Transverse colon (tissue), 4 donors: ENCODE measurements at regions of chr2 and their contacts with region 1.

Region 1: GRCh38 chr2:152600698-152601097 is 116.6 kb downstream of the PRPF40A start:
- DNase-seq: no peak
- H3K4me3 ChIP-seq: no peak overlapping the region
- H3K27ac ChIP-seq: no peak overlapping the region
- H3K4me1 ChIP-seq: no peaks in the 10 kb centered on the region
- H3K27me3 ChIP-seq: no peaks in the 10 kb centered on the region
- CTCF ChIP-seq: no peak
- EP300 ChIP-seq: no peak
- POLR2A ChIP-seq: no peak

Region 2: GRCh38 chr2:152558158-152558984 is 42.3 kb before region 1 on chr2:
- in situ Hi-C with region 1: no loop called
- intact Hi-C with region 1: loop called (anchors 10 kb)
- DNase-seq: no peak
- H3K4me3 ChIP-seq: no peak overlapping the region
- H3K27ac ChIP-seq: no peak overlapping the region
- H3K4me1 ChIP-seq: peaks cover 0 to 6% (median 0%) of the 10 kb centered on the region in 4 donors
- H3K27me3 ChIP-seq: no peaks in the 10 kb centered on the region
- CTCF ChIP-seq: no peak
- EP300 ChIP-seq: no peak
- POLR2A ChIP-seq: no peak